Panc1 (cell line): ENCODE measurements at regions of chr17 and their contacts with region 1.

Region 1: DNA sequence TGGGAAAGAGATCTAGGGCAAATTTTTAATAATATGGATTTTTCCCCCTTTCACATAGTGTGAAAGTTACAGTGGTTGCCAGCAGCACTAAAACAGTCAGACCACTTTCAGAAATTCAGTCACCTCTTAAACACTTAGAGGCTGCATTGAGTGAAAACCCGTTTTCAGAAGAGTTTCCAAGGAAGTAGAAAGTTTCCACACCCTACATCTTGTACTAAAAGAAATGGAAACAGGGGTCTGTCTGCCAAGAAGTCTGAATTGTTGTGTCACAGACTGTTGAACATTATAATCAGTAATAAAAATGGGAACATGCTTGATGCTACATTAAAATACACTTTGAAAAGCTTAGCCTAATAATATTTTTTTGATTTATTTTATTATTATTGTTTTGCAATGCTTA is 278.9 kb upstream of the KCNJ16 start:
- DNase-seq: no peak
- ATAC-seq: no peak
- H3K4me3 ChIP-seq: no peak overlapping the region
- H3K27ac ChIP-seq: no peak overlapping the region
- H3K4me1 ChIP-seq: no peaks in the 10 kb centered on the region
- H3K27me3 ChIP-seq: no peaks in the 10 kb centered on the region
- CTCF ChIP-seq: no peak

Region 2: GRCh38 chr17:69743091-69743490 is 53.0 kb before region 1 on chr17:
- CTCF ChIA-PET with region 1: no interaction called
- POLR2A ChIA-PET with region 1: interaction called, 10 read pairs
- in situ Hi-C with region 1: no loop called
- intact Hi-C with region 1: no loop called
- DNase-seq: no peak
- ATAC-seq: no peak
- H3K4me3 ChIP-seq: no peak overlapping the region
- H3K27ac ChIP-seq: no peak overlapping the region
- H3K4me1 ChIP-seq: no peaks in the 10 kb centered on the region
- H3K27me3 ChIP-seq: no peaks in the 10 kb centered on the region
- CTCF ChIP-seq: no peak

Region 3: DNA sequence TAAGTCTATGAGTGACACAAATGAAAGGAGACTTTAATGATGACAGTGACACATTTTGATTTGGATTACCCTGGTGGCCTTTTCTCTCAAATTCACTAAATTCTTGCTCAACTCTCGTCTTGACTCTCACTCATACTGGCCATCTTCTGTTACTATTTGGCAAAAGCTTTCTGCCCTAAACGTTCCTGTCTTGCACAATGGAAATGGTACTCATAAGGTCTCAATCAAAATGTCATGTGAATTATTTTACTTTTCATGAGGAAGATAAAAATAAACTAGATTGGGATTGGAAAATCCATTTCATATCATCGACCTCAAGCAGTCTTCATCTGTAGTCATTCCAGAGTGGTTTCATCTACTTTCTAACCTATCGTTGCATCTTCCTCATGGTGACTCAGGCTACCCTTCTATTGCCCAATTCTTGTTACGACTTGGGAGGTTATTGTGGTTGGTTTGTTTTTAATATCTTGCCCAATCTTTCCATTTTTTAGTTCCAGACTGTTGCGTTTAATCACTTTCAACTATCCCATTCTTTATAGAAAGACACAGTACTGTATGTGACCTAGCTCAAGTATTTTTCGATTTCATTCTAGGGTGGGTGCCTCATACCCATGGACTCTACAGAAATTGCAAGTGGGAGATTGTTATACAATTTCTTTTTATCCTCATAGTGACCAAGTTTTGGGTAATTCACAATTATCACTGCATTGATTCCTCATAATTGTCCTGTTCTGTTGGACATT is 38.2 kb before region 1 on chr17:
- CTCF ChIA-PET with region 1: no interaction called
- POLR2A ChIA-PET with region 1: interaction called, 15 read pairs
- in situ Hi-C with region 1: no loop called
- intact Hi-C with region 1: no loop called
- DNase-seq: no peak
- ATAC-seq: no peak
- H3K4me3 ChIP-seq: no peak overlapping the region
- H3K27ac ChIP-seq: no peak overlapping the region
- H3K4me1 ChIP-seq: no peaks in the 10 kb centered on the region; the same call in 1 of the 2 replicates
- H3K27me3 ChIP-seq: no peaks in the 10 kb centered on the region
- CTCF ChIP-seq: no peak

Region 4: DNA sequence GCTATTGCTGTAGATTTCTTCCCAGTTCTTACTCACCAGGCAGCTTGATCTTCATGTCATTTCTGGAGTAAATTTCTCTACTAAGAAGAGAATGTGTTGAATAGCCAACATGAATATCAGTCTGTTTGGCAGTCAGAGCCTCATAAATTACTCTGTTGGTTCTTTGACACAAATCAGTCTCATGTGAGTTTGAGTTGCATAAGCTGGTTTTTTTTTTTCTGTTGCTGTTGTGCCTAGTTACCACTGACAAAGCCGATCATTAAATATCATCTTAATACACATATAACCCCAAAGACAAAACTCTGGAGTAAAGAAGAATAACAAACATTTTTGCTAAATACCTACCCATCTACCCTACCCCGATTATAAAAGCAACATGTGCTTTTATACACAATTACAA is 38.4 kb after region 1 on chr17:
- CTCF ChIA-PET with region 1: no interaction called
- POLR2A ChIA-PET with region 1: no interaction called
- in situ Hi-C with region 1: no loop called
- intact Hi-C with region 1: no loop called
- DNase-seq: no peak
- ATAC-seq: no peak
- H3K4me3 ChIP-seq: no peak overlapping the region
- H3K27ac ChIP-seq: no peak overlapping the region
- H3K4me1 ChIP-seq: no peaks in the 10 kb centered on the region
- H3K27me3 ChIP-seq: no peaks in the 10 kb centered on the region
- CTCF ChIP-seq: no peak